ENCODE measurements at regions of chr11 and their contacts with region 1.

Region 1: DNA sequence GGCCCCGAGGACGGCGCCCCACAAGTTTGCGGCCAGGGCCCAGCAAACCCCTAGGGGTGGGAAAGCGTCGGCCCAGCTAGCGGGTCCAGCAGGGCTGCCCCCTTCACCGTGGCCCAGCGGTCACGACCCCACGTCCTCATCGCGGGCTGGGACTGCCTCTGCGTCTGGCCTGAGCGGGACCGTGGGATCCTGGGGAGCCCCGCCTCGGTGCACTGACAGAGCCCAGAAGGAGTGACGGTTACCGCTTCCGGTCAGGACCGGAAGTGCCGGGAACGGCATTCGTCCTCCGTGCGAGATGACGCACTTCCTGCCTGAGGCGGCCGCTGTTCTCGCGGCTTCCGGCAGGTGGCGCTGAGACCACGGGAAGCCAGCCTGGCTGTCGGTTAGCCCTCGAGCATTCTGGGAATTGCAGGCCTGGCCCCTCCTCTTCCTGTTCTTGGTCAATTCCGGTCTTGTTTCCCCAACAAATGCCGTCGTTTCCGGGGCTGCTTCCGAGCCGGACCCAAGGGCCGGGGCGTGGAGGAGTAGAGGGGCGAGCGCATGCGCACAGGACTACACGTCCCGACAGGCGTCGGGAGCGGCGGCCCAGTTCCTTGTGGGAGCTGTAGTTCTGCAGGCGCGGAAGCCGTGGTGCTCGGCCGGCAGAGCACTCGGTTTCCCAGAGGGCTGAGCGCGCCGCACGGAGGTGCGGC is at the start of gene TSSC4:
- DNase-seq: peak; percentile 100
- ATAC-seq: peak; percentile 88
- H3K4me3 ChIP-seq: peak within 1 kb of the TSS; percentile 90
- H3K27ac ChIP-seq: peak within 1 kb of the TSS; percentile 69
- H3K4me1 ChIP-seq: peaks cover 9% of the 10 kb centered on the region
- H3K27me3 ChIP-seq: no peaks in the 10 kb centered on the region
- CTCF ChIP-seq: peak; percentile 100
- POLR2A ChIP-seq: peak; percentile 53
- RAD21 ChIP-seq: peak; percentile 65
- total RNA-seq, gene TSSC4: 40.0 and 45.3 TPM in 2 replicates

Region 2: GRCh38 chr11:2377511-2378443 is 22.4 kb before region 1 on chr11:
- CTCF ChIA-PET with region 1: no interaction called
- POLR2A ChIA-PET with region 1: interaction called, 6 read pairs
- dilution Hi-C with region 1: no loop called
- in situ Hi-C with region 1: no loop called
- intact Hi-C with region 1: loop called (anchors 1 kb)
- DNase-seq: peak; percentile 33
- ATAC-seq: peak; percentile 63
- H3K4me3 ChIP-seq: peak overlapping the region; percentile 100
- H3K27ac ChIP-seq: peak overlapping the region; percentile 91
- H3K4me1 ChIP-seq: peaks cover 26% of the 10 kb centered on the region
- H3K27me3 ChIP-seq: no peaks in the 10 kb centered on the region
- CTCF ChIP-seq: no peak
- POLR2A ChIP-seq: 0 out of 2 replicates have a peak, but pooled peaks have one; percentile 12
- RAD21 ChIP-seq: no peak

Region 3: GRCh38 chr11:2428322-2428795 is 28.1 kb after region 1 on chr11:
- CTCF ChIA-PET with region 1: no interaction called
- POLR2A ChIA-PET with region 1: no interaction called
- dilution Hi-C with region 1: no loop called
- in situ Hi-C with region 1: no loop called
- intact Hi-C with region 1: no loop called
- DNase-seq: peak; percentile 34
- ATAC-seq: peak; percentile 88
- H3K4me3 ChIP-seq: no peak overlapping the region
- H3K27ac ChIP-seq: no peak overlapping the region
- H3K4me1 ChIP-seq: no peaks in the 10 kb centered on the region
- H3K27me3 ChIP-seq: peaks cover 11% of the 10 kb centered on the region; the same call in 1 of the 2 replicates
- CTCF ChIP-seq: peak; percentile 83
- POLR2A ChIP-seq: no peak
- RAD21 ChIP-seq: peak; percentile 84

Region 4: GRCh38 chr11:3205261-3206135 is 805.3 kb after region 1 on chr11:
- CTCF ChIA-PET with region 1: no interaction called
- POLR2A ChIA-PET with region 1: interaction called, 17 read pairs
- dilution Hi-C with region 1: no loop called
- in situ Hi-C with region 1: no loop called
- intact Hi-C with region 1: no loop called
- DNase-seq: no peak
- ATAC-seq: peak; percentile 35
- H3K4me3 ChIP-seq: no peak overlapping the region
- H3K27ac ChIP-seq: no peak overlapping the region
- H3K4me1 ChIP-seq: no peaks in the 10 kb centered on the region; the same call in 1 of the 2 replicates
- H3K27me3 ChIP-seq: peaks cover 63% of the 10 kb centered on the region
- CTCF ChIP-seq: no peak
- POLR2A ChIP-seq: no peak
- RAD21 ChIP-seq: no peak